ENCODE measurements at regions of chr11 and their contacts with region 1.

Region 1: DNA sequence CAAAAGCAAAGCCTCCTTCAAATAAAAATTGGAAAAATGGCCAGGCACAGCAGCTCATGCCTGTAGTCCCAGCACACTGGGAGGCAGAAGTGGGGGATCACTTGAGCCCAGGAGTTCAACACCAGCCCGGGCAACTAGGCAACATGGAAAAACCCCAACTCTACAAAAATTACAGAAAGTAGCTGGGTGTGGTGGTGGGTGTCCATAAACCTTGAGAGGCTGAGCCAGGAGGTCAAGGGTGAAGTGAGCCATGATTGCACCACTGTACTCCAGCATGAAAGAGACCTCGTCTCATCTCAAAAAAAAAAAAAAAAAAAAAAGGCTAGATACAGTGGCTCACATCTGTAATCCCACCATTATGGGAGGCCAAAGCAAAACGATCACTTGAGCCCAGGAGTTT is 22.3 kb downstream of the DDX6 start:
- DNase-seq: no peak
- H3K4me3 ChIP-seq: no peak overlapping the region
- H3K27me3 ChIP-seq: no peaks in the 10 kb centered on the region
- CTCF ChIP-seq: no peak

Region 2: DNA sequence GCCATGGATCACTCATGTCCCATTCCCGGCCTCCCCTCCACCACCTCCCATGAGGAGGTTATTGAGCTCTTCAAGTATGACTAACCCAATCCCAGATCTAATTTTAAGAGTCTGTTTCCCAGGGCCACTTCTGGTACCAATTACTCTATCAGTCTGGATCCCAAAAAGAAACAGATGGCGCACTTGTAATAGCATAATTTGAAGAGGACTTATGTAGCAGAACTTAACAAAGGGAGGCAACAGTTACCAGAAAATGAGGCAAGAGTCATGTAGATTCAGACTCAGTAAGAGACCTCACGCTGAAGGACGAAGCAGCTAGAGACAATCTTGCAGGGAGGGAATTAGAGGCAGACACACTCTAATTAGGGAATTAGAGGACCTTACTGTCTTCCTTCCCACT is 24.6 kb before region 1 on chr11:
- CTCF ChIA-PET with region 1: interaction called, 3 read pairs
- POLR2A ChIA-PET with region 1: interaction called, 10 read pairs
- DNase-seq: peak; percentile 60
- H3K4me3 ChIP-seq: no peak overlapping the region
- H3K27me3 ChIP-seq: no peaks in the 10 kb centered on the region
- CTCF ChIP-seq: no peak

Region 3: DNA sequence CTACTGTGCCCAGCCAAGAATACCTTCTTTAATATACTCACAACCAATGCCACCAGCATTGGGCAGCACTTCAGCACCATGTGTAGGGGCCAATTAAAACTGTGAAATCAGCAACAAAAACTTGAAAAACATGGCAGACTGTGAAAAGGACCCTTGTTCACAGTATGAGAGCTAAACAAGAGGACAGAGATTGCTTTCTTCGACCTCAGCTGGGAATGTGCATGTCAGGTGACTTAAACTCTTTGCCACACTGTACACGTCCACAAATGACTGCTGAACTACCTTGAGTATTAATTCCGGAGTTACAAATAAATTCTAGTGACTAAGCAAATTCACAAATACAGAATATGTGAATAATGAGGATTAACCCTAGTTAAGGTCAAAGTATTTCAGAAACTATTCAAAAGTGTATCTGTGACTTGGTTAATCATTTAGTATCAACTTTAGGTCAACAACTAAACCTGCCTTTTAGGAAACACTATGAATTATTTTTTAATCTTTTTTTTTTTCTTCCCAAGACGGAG is 10.8 kb before region 1 on chr11:
- CTCF ChIA-PET with region 1: no interaction called
- POLR2A ChIA-PET with region 1: no interaction called
- DNase-seq: no peak
- H3K4me3 ChIP-seq: no peak overlapping the region
- H3K27me3 ChIP-seq: no peaks in the 10 kb centered on the region
- CTCF ChIP-seq: no peak